ENCODE measurements at regions of chr3 and their contacts with region 1.

Region 1: GRCh38 chr3:130820976-130821375 is 72.9 kb upstream of the ATP2C1 start:
- DNase-seq: no peak
- ATAC-seq: no peak
- H3K4me3 ChIP-seq: no peak overlapping the region
- H3K27ac ChIP-seq: no peak overlapping the region
- H3K4me1 ChIP-seq: no peaks in the 10 kb centered on the region
- H3K27me3 ChIP-seq: no peaks in the 10 kb centered on the region; a peak in 1 of 4 replicates
- CTCF ChIP-seq: no peak
- EP300 ChIP-seq: no peak
- POLR2A ChIP-seq: no peak
- RAD21 ChIP-seq: no peak

Region 2: GRCh38 chr3:130715616-130716015 is 105.4 kb before region 1 on chr3:
- CTCF ChIA-PET with region 1: no interaction called
- POLR2A ChIA-PET with region 1: no interaction called
- RAD21 ChIA-PET with region 1: no interaction called
- SMC1A ChIA-PET with region 1: no interaction called
- in situ Hi-C with region 1: no loop called
- intact Hi-C with region 1: no loop called
- DNase-seq: no peak
- ATAC-seq: no peak
- H3K4me3 ChIP-seq: no peak overlapping the region
- H3K27ac ChIP-seq: no peak overlapping the region
- H3K4me1 ChIP-seq: no peaks in the 10 kb centered on the region
- H3K27me3 ChIP-seq: no peaks in the 10 kb centered on the region
- CTCF ChIP-seq: no peak
- EP300 ChIP-seq: no peak
- POLR2A ChIP-seq: no peak
- RAD21 ChIP-seq: no peak

Region 3: GRCh38 chr3:130725746-130726145 is 95.2 kb before region 1 on chr3:
- CTCF ChIA-PET with region 1: no interaction called
- POLR2A ChIA-PET with region 1: no interaction called
- RAD21 ChIA-PET with region 1: no interaction called
- SMC1A ChIA-PET with region 1: no interaction called
- in situ Hi-C with region 1: no loop called
- intact Hi-C with region 1: no loop called
- DNase-seq: no peak
- ATAC-seq: no peak
- H3K4me3 ChIP-seq: no peak overlapping the region
- H3K27ac ChIP-seq: no peak overlapping the region
- H3K4me1 ChIP-seq: no peaks in the 10 kb centered on the region
- H3K27me3 ChIP-seq: no peaks in the 10 kb centered on the region
- CTCF ChIP-seq: no peak
- EP300 ChIP-seq: no peak
- POLR2A ChIP-seq: no peak
- RAD21 ChIP-seq: no peak

Region 4: DNA sequence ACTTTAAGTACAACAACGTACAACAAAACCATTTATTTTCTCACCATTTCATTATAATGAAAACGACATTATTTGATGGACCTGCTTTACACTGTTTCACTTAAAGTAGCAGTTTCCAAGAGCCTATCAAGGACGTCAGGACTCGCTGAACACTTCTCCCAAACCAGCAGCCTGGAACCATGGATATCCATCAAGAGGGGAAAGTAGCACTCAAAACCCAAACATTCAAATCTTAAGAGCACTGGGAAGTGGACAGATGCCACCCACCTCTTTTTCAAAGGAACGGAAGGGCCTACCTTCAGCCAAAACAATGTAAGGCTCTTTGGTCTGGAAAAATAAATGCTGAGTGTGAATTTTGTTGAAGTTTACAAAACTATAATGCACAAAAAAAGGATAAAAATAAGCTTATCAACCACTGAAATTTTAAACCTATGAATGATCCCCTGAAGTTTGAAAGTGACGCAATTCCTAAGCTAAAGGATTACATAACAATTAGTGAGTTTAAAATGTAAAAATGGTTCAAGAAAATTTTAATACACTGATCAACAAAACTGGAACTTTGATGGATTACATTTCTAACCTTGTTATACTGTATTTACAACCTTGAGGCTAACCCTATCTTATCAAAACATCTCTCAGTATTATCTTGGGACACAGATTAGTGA is 78.9 kb before region 1 on chr3:
- CTCF ChIA-PET with region 1: no interaction called
- POLR2A ChIA-PET with region 1: no interaction called
- RAD21 ChIA-PET with region 1: no interaction called
- SMC1A ChIA-PET with region 1: no interaction called
- in situ Hi-C with region 1: no loop called
- intact Hi-C with region 1: no loop called
- DNase-seq: no peak
- ATAC-seq: no peak
- H3K4me3 ChIP-seq: 0 out of 2 replicates have a peak overlapping the region, but pooled peaks have one; percentile 29
- H3K27ac ChIP-seq: no peak overlapping the region
- H3K4me1 ChIP-seq: peaks cover 4% of the 10 kb centered on the region; the same call in 1 of the 2 replicates
- H3K27me3 ChIP-seq: no peaks in the 10 kb centered on the region
- CTCF ChIP-seq: no peak
- EP300 ChIP-seq: no peak
- POLR2A ChIP-seq: no peak
- RAD21 ChIP-seq: no peak

Region 5: DNA sequence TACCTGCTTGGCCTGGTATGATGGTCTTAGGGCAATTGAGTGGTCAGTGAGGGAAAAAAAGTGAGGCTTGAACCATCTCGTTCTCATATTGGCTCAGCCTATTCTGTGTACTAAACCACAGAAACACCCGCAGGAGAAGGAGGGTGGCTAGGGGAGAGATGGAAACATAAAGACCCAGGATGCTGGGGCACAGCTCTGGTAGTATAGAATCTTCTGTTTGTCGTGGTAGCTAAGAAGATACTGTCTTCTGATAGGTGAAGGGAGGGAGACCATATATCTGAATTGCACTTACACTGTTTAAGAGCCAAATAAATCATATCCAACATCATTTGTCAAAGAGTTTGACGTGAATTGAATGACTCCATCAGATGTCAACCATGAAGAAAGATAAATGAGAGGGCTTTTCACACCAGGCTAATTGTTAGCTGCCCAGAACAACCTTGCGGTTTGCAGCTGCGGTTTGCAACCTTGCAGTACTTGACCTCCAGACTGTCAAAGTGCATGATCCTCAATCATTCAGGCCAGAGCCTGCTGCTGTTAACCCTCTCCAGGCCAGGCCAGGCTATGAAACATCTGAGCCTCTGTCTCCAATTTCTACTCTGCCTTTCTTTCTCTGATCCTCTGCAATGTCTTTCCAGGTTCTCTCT is 33.4 kb before region 1 on chr3:
- CTCF ChIA-PET with region 1: no interaction called
- POLR2A ChIA-PET with region 1: no interaction called
- RAD21 ChIA-PET with region 1: no interaction called
- SMC1A ChIA-PET with region 1: no interaction called
- in situ Hi-C with region 1: no loop called
- intact Hi-C with region 1: loop called (anchors 5 kb)
- DNase-seq: no peak
- ATAC-seq: peak; percentile 81
- H3K4me3 ChIP-seq: no peak overlapping the region
- H3K27ac ChIP-seq: no peak overlapping the region
- H3K4me1 ChIP-seq: no peaks in the 10 kb centered on the region
- H3K27me3 ChIP-seq: no peaks in the 10 kb centered on the region
- CTCF ChIP-seq: no peak
- EP300 ChIP-seq: peak; percentile 23; a peak in 2 of 4 replicates
- POLR2A ChIP-seq: no peak
- RAD21 ChIP-seq: no peak